GM23248 (cell line): ENCODE measurements at regions of chr13 and their contacts with region 1.

Region 1: GRCh38 chr13:97109841-97110492 is 112.2 kb upstream of the MBNL2 start:
- DNase-seq: peak; percentile 95
- H3K4me3 ChIP-seq: peak overlapping the region; percentile 60
- H3K27ac ChIP-seq: no peak overlapping the region
- H3K4me1 ChIP-seq: 0 out of 2 replicates have a peak, but pooled peaks cover 5% of the 10 kb centered on the region
- H3K27me3 ChIP-seq: no peaks in the 10 kb centered on the region

Region 2: DNA sequence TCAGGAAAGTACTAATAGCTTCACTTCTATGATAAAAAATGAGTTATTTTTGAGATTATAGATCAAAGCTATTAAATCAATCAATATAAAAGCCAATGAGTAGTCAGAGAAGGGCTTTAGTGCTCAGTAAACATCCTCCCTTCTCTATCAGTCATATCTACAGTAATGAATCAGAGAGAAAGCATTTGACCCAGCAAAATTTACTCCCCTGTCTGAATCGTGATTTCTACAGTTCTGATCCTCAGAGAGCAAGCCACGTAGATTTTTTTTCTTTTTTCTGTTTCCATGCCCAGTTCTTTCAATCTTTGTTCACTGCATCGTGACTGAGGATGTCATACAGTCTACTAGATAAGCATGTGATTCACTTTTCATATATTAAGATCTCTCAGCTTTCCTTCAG is 96.0 kb after region 1 on chr13:
- in situ Hi-C with region 1: loop called (anchors 10 kb)
- DNase-seq: peak; percentile 41
- H3K4me3 ChIP-seq: no peak overlapping the region
- H3K27ac ChIP-seq: no peak overlapping the region
- H3K4me1 ChIP-seq: peaks cover 6% of the 10 kb centered on the region; the same call in 1 of the 2 replicates
- H3K27me3 ChIP-seq: no peaks in the 10 kb centered on the region

Region 3: GRCh38 chr13:97339019-97339987 is 229.3 kb after region 1 on chr13:
- in situ Hi-C with region 1: no loop called
- DNase-seq: peak; percentile 98
- H3K4me3 ChIP-seq: peak overlapping the region; percentile 17
- H3K27ac ChIP-seq: peak overlapping the region; percentile 80
- H3K4me1 ChIP-seq: peaks cover 14% of the 10 kb centered on the region
- H3K27me3 ChIP-seq: no peaks in the 10 kb centered on the region